ENCODE measurements at regions of chr5 and their contacts with region 1.

Region 1: GRCh38 chr5:55159763-55160492 is at the start of gene GPX8:
- DNase-seq: peak in 3 of 9 experiments; percentile 32 to 73 (median 64)
- ATAC-seq: peak; percentile 79
- H3K4me3 ChIP-seq: no peak within 1 kb of the TSS
- H3K4me3 Mint-ChIP-seq: no peak within 1 kb of the TSS
- H3K27ac ChIP-seq: no peak within 1 kb of the TSS
- H3K27ac Mint-ChIP-seq: no peak within 1 kb of the TSS
- H3K4me1 ChIP-seq: no peaks in the 10 kb centered on the region
- H3K4me1 Mint-ChIP-seq: no peaks in the 10 kb centered on the region
- H3K27me3 ChIP-seq: no peaks in the 10 kb centered on the region
- H3K27me3 Mint-ChIP-seq: peaks cover 19% of the 10 kb centered on the region
- CTCF ChIP-seq: peak; percentile 73
- total RNA-seq, gene GPX8: not detected

Region 2: DNA sequence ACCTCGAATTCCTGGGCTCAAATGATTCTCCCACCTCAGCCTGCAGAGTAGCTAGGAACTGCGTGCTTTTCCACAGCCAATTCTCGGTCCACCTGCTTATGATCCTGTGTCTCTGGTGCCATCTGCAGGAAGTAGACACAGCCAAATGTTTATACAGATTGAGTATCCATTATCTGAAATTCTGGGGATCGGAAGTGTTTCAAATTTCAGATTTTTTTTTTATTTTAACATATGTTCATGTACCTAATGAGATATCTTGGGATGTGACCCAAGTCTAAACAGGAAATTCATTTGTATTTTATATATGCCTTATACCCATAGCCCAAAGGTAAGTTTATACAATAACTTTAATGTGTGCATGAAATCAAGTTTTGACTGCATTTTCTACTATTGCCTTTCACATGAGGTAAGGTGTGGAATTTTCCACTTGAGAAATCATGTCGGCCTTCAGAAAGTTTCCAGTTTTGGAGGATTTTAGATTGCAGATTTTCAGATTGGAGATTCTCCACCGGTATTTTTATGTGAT is 264.0 kb before region 1 on chr5:
- CTCF ChIA-PET with region 1: interaction called, 39 read pairs
- POLR2A ChIA-PET with region 1: no interaction called
- intact Hi-C with region 1: no loop called
- DNase-seq: peak in 2 of 9 experiments; percentile 26 to 46
- ATAC-seq: no peak
- H3K4me3 ChIP-seq: no peak overlapping the region
- H3K4me3 Mint-ChIP-seq: peak overlapping the region; percentile 60
- H3K27ac ChIP-seq: no peak overlapping the region
- H3K27ac Mint-ChIP-seq: peak overlapping the region; percentile 32
- H3K4me1 ChIP-seq: no peaks in the 10 kb centered on the region
- H3K4me1 Mint-ChIP-seq: peaks cover 5% of the 10 kb centered on the region
- H3K27me3 ChIP-seq: no peaks in the 10 kb centered on the region
- H3K27me3 Mint-ChIP-seq: peaks cover 26% of the 10 kb centered on the region
- CTCF ChIP-seq: no peak